ENCODE measurements at regions of chr19 and their contacts with region 1.

Region 1: GRCh38 chr19:47813304-47814004 is 8.3 kb upstream of the CRX start:
- DNase-seq: no peak
- ATAC-seq: peak; percentile 97
- H3K4me3 ChIP-seq: no peak overlapping the region
- H3K27ac ChIP-seq: no peak overlapping the region
- H3K4me1 ChIP-seq: no peaks in the 10 kb centered on the region
- H3K27me3 ChIP-seq: no peaks in the 10 kb centered on the region
- CTCF ChIP-seq: peak; percentile 81

Region 2: DNA sequence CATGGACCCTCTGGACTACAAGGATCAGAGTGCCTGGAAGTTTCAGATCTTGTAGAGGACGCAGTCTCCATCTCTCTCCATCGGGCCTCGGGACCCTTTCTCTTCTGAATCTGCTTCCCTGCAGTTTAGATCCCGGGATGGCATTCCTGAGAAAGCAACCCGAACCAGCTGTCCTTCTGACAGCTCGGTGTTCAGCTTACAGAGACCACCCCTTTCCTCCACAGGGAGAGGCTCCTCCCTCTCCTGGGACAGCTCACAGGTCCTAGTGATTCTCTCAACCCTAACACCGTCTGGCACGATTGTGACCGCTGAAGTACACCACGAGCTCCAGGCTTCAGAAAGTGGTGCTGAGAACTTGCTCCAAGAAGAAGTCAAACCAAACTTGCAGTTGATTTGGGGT is 26.5 kb after region 1 on chr19:
- CTCF ChIA-PET with region 1: interaction called, 10 read pairs
- POLR2A ChIA-PET with region 1: interaction called, 4 read pairs
- in situ Hi-C with region 1: no loop called
- intact Hi-C with region 1: no loop called
- DNase-seq: no peak
- ATAC-seq: no peak
- H3K4me3 ChIP-seq: no peak overlapping the region
- H3K27ac ChIP-seq: no peak overlapping the region
- H3K4me1 ChIP-seq: no peaks in the 10 kb centered on the region
- H3K27me3 ChIP-seq: no peaks in the 10 kb centered on the region
- CTCF ChIP-seq: no peak

Region 3: DNA sequence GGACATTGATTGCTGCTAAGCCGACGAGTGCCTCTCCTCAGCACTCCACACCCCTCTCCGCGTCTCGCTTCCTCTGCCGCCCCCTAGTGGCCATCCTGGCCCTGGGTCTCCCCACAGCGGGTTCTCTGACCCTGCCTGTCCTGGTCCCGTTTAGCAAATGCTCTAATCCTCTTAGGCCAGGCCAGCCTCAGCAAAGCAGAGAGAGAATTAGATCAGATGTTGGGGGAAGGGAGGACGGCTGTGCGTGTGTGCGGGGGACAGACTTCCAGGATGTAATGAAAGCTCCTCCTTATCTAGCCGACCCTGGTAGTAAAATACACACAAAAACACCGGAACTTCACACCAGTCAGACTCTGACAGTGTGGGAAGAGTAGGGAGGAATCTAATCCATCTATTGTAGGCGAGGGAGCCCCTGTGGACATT is 50.1 kb after region 1 on chr19:
- CTCF ChIA-PET with region 1: no interaction called
- POLR2A ChIA-PET with region 1: no interaction called
- in situ Hi-C with region 1: no loop called
- intact Hi-C with region 1: loop called (anchors 5 kb)
- DNase-seq: peak; percentile 52
- ATAC-seq: peak; percentile 99
- H3K4me3 ChIP-seq: no peak overlapping the region
- H3K27ac ChIP-seq: no peak overlapping the region
- H3K4me1 ChIP-seq: no peaks in the 10 kb centered on the region
- H3K27me3 ChIP-seq: no peaks in the 10 kb centered on the region
- CTCF ChIP-seq: peak; percentile 93

Region 4: DNA sequence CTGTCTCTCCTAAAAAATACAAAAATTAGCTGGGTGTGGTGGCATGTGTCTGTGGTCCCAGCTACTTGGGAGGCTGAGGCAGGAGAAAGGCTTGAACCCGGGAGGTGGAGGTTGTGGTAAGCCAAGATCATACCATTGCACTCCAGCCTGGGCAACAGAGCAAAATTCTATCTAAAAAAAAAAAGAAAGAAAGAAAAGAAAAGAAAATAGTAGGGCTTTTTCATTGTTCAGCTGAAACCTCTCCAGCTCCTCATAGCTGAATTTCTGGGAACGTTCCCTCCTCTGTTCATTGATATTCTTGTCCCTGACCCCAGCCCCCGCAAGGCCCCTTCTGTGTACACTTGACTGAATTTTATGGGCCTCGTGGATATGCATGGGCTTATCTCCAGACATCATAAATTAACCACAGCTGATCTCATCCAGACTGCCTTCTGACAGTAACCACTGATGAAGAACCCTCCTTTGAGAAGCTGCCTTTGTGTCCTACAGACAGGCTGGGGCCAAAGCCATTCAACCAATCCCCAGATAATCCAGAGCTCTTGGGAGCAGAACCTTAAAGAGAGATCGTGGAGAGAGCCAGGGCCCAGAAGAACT is 180.9 kb after region 1 on chr19 and contains the start of gene ELSPBP1:
- CTCF ChIA-PET with region 1: no interaction called
- POLR2A ChIA-PET with region 1: no interaction called
- in situ Hi-C with region 1: no loop called
- intact Hi-C with region 1: no loop called
- DNase-seq: no peak
- ATAC-seq: no peak
- H3K4me3 ChIP-seq: no peak within 1 kb of the TSS
- H3K27ac ChIP-seq: no peak within 1 kb of the TSS
- H3K4me1 ChIP-seq: no peaks in the 10 kb centered on the region
- H3K27me3 ChIP-seq: peaks cover 9% of the 10 kb centered on the region
- CTCF ChIP-seq: no peak
- total RNA-seq, gene ELSPBP1: not detected

Measured in Panc1 (cell line).